Activated naive CD4-positive, alpha-beta T cell treated with anti-CD3 and anti-CD28 coated beads, Interleukin-2, amount 10 ng/mL, durations not matched to agents 7 days and 5 days (primary cell): ENCODE measurements at regions of chr12 and their contacts with region 1.

Region 1: GRCh38 chr12:13211859-13212664 is 15.5 kb downstream of the EMP1 start:
- DNase-seq: peak; percentile 83
- H3K4me3 Mint-ChIP-seq: no peak overlapping the region
- H3K27ac Mint-ChIP-seq: no peak overlapping the region
- H3K4me1 Mint-ChIP-seq: peaks cover 34% of the 10 kb centered on the region
- H3K27me3 Mint-ChIP-seq: peaks cover 13% of the 10 kb centered on the region

Region 2: DNA sequence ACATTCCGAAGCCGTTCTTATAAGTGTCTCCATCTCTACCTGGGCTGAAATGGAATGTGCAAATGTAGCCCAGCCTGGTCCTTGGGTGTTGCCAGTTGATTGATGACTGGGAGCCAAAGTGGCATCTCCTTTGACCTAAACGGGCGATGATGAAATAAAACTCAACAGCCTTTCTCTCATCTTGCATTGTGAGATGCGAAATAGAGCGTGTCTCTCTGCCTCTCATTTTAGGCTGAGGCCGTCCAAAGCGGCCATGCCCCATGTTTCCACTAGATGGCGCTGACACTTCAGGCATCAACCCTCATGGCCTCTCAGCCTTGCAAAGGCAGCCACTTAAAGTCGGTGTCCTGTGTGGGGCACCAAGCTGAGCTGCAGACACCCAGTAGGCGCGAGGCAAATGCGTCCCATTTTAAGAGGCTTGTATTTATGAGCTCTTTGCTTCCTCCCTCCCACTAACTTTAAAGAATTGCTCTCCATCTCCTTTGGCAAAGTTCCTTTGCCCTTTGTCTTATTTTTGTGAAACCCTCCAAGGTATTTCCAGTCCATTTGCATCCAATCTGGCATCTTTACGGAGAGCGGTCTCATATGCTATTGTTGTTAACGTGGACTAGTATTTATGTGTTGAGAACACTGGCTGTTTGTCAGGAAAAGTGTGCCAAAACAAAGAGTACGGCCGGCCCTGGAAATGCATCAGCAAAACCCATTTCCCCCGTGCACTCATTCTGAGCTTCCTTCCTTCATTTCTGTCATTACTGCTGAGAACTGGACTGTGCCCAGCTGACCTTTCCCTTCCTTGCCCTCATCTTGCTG is 295.7 kb before region 1 on chr12:
- CTCF ChIA-PET with region 1: interaction called, 90 read pairs
- DNase-seq: peak; percentile 91
- H3K4me3 Mint-ChIP-seq: no peak overlapping the region
- H3K27ac Mint-ChIP-seq: no peak overlapping the region
- H3K4me1 Mint-ChIP-seq: peaks cover 10% of the 10 kb centered on the region
- H3K27me3 Mint-ChIP-seq: peaks cover 46% of the 10 kb centered on the region

Region 3: DNA sequence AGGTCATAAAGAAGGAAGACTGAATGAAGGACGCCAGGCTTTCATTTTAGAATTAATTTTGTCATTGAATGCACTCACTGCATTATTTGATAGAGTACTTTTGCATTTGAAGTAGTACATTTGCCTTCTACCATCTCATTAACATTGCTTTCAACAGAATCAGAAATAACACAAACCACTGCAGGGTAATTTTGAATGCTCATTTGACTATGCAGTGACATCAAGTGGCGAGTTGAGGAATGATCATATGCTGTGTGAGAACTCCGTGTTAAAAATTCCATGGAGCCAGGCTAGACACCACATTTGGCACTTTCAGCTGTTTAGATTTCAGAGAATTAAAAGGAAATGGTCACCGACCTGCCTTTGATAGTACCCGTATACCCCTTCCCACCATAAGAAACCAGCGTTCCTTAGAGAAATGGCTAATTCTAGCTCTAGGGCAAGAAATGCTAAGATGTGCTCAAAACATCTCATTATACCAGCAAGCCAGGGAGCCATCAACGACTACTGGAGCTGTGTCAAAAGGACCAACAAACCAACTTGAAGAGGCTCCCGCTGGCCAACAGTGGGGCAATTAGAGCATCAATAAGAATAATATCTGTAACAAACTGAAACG is 228.5 kb before region 1 on chr12:
- CTCF ChIA-PET with region 1: interaction called, 17 read pairs
- DNase-seq: peak; percentile 39
- H3K4me3 Mint-ChIP-seq: no peak overlapping the region
- H3K27ac Mint-ChIP-seq: no peak overlapping the region
- H3K4me1 Mint-ChIP-seq: no peaks in the 10 kb centered on the region
- H3K27me3 Mint-ChIP-seq: no peaks in the 10 kb centered on the region

Region 4: DNA sequence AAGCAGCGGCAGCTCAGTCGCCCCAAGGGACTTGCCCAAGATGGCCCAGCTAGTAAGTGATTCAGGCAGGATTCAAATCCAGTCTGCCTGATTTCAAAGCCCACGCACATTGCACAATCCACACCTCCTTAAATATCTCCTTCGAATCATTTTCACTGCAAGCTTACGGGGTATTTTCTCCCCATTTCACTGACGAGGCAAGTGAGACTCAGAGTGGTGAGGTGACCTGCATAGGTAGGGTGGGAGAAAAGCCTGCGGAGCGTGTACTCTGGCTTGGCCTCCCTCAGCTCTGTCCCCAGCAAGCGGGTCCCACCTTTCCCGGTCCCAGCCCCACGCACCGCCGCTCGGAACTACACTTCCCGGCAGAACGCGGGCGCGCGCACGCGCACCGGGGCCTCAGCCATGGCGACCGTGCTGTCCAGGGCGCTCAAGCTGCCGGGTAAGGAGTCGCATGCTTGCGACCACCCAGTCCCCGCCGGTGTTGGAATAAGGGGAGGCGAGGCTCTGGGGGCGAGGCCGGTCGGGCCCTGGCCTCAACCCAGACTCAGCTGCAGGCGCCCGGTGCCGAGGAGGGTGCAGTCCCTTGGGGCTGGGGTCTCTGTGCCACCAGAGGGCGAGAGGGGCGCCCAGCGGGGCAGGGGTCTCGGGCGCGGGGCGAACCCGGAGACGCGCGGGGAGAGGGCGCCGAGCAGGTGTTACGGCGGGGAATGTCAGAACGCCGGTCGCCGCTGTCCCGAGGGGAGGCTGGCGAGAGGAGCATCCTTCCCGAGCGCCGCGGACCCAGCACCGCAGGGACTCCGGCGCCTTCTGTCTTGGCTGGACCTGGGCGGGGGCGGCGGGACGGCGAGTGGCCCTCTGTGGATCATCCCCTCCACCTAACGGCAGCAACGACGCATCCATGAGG is 167.8 kb before region 1 on chr12 and contains the start of gene FAM234B:
- CTCF ChIA-PET with region 1: interaction called, 13 read pairs
- DNase-seq: peak; percentile 80
- H3K4me3 Mint-ChIP-seq: peak within 1 kb of the TSS; percentile 79
- H3K27ac Mint-ChIP-seq: no peak within 1 kb of the TSS
- H3K4me1 Mint-ChIP-seq: peaks cover 13% of the 10 kb centered on the region
- H3K27me3 Mint-ChIP-seq: peaks cover 38% of the 10 kb centered on the region

Region 5: GRCh38 chr12:13094347-13094746 is 117.7 kb before region 1 on chr12:
- CTCF ChIA-PET with region 1: interaction called, 116 read pairs
- DNase-seq: no peak
- H3K4me3 Mint-ChIP-seq: no peak overlapping the region
- H3K27ac Mint-ChIP-seq: no peak overlapping the region
- H3K4me1 Mint-ChIP-seq: peaks cover 22% of the 10 kb centered on the region
- H3K27me3 Mint-ChIP-seq: peaks cover 8% of the 10 kb centered on the region

Region 6: GRCh38 chr12:13100882-13101769 is 110.9 kb before region 1 on chr12:
- CTCF ChIA-PET with region 1: interaction called, 116 read pairs
- DNase-seq: peak; percentile 95
- H3K4me3 Mint-ChIP-seq: peak overlapping the region; percentile 74
- H3K27ac Mint-ChIP-seq: peak overlapping the region; percentile 74
- H3K4me1 Mint-ChIP-seq: peaks cover 55% of the 10 kb centered on the region
- H3K27me3 Mint-ChIP-seq: peaks cover 8% of the 10 kb centered on the region

Region 7: DNA sequence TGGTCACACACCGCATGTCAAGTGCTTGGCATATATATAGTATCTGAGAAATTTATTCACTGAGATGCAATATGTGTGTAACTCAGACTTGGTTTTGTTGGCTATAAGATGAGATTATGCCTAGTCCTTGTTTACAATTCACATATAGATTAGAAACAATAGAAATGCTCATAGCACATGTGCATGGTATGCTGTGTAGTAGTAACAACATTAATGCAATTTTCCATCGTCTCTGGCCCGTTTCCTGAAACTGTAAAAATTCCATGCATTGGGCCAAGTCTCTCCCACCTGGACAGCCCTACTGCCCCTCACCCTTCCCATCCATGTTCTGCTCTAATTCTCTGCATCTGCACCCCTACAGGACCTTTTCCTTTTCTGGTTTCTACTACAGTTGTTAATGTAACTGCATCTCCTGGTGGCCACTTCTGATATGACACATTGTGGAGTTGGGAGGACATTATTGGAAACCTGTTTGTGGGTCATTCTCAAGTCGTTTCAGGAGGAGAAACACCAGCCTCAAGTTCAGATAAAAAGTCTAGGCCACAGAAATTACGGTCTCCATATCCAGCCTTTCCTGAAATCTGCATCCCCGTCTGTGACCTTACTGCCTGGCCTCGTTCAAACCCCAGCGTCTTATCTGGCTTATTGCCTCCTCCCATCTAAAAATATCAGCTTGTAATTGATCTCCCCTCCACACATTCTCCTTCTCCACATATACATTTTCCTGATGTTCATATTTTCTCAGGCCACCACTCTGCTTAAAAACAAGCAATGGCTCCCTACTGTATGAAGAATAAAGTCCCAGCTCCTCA is 22.0 kb after region 1 on chr12:
- CTCF ChIA-PET with region 1: interaction called, 13 read pairs
- DNase-seq: peak; percentile 58
- H3K4me3 Mint-ChIP-seq: no peak overlapping the region
- H3K27ac Mint-ChIP-seq: no peak overlapping the region
- H3K4me1 Mint-ChIP-seq: no peaks in the 10 kb centered on the region
- H3K27me3 Mint-ChIP-seq: peaks cover 13% of the 10 kb centered on the region